Right cardiac atrium (tissue), 5 donors: ENCODE measurements at regions of chr6 and their contacts with region 1.

Region 1: GRCh38 chr6:161613711-161614110 is 339.9 kb upstream of the AGPAT4 start:
- DNase-seq: no peak
- ATAC-seq: no peak
- H3K4me3 ChIP-seq: no peak overlapping the region
- H3K27ac ChIP-seq: no peak overlapping the region
- H3K4me1 ChIP-seq: no peaks in the 10 kb centered on the region
- H3K27me3 ChIP-seq: no peaks in the 10 kb centered on the region

Region 2: DNA sequence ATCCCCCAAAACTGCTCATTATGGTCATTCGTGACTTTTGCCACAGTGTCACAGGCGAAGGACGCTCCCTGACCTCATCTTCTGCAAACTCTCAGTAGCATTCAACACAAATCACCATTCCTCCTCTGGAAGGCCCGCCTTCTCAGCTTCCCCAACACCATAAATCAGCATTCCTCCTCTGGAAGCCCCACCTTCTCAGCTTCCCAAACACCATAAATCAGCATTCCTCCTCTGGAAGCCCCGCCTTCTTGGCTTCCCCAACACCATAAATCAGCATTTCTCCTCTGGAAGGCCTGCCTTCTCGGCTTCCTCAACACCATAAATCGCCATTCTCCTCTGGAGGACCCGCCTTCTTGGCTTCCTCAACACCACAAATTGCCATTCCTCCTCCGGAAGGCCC is 51.8 kb before region 1 on chr6:
- intact Hi-C with region 1: loop called in 1 of 4 experiments (anchors 2 kb)
- DNase-seq: no peak
- ATAC-seq: no peak
- H3K4me3 ChIP-seq: no peak overlapping the region
- H3K27ac ChIP-seq: no peak overlapping the region
- H3K4me1 ChIP-seq: no peaks in the 10 kb centered on the region
- H3K27me3 ChIP-seq: no peaks in the 10 kb centered on the region

Region 3: DNA sequence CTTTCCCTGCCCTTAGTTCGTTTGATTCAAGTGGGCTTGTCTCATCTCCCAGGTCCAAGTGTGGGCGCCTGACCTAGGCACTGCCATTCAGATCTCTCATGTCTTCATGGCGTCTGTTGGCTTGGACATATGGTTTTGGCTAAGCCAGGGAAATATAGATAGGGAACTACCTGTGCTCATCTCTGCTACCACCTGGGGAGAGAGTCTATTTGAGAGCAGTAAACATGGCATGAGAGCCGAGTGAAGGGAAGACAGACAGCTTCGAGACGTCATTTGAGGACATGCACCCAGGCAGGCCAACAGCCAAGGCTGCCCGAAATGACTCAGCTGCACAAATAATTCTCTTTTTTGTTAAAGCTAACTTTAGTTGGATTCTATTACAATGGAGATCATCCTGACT is 30.8 kb after region 1 on chr6:
- intact Hi-C with region 1: no loop called
- DNase-seq: no peak
- ATAC-seq: no peak
- H3K4me3 ChIP-seq: no peak overlapping the region
- H3K27ac ChIP-seq: no peak overlapping the region
- H3K4me1 ChIP-seq: no peaks in the 10 kb centered on the region
- H3K27me3 ChIP-seq: no peaks in the 10 kb centered on the region